PC-9 (cell line): ENCODE measurements at regions of chr5 and their contacts with region 1.

Region 1: DNA sequence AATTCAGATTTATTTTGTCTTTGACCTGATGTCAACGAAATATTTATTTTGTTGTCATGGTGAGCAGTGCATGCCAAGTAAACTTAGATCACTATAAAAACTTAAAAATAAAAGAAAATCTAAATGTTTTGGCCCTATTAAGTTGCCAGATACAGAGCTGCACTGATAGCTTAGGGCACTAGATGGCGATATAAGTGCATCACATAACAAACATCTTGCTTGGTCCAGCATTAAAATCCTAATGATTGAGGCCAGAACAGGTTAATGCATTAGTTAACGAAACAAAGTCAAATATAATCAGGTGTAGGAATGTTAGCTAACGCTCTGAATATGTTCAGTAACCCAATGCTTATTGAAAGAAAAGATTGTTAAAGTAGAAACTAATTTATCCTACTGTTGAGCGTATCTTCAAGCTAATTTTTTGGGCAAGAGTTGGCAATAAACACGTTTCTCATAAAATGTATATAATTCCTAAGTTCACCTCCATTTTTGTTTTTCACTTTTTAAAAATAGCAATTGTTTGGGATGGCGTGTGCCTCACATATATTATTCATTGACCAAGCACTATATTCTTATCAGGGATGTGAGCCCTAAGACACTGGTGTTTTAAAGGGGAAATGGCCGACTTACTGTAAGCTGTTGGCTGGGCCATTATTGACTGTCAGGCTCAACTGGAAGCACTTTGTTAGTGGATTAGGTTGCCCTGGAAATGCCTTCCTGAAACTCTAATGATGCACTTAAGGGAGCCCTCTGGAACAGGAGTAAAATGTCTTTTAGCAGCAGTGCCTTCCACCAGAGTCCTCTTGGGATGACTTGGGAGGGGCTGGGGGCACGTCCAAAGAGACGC is 33.3 kb downstream of the KCTD16 start:
- DNase-seq: peak; percentile 27 to 42
- H3K4me3 ChIP-seq: no peak overlapping the region
- H3K27ac ChIP-seq: no peak overlapping the region
- H3K4me1 ChIP-seq: peaks cover 3% of the 10 kb centered on the region
- H3K27me3 ChIP-seq: peaks cover 40% of the 10 kb centered on the region
- CTCF ChIP-seq: peak; percentile 93

Region 2: GRCh38 chr5:143874312-143874711 is 329.7 kb before region 1 on chr5:
- CTCF ChIA-PET with region 1: no interaction called
- POLR2A ChIA-PET with region 1: no interaction called
- intact Hi-C with region 1: no loop called
- DNase-seq: peak in 1 of 2 experiments; percentile 49
- H3K4me3 ChIP-seq: no peak overlapping the region
- H3K27ac ChIP-seq: no peak overlapping the region
- H3K4me1 ChIP-seq: peaks cover 14% of the 10 kb centered on the region; the same call in 1 of the 2 replicates
- H3K27me3 ChIP-seq: no peaks in the 10 kb centered on the region
- CTCF ChIP-seq: no peak

Region 3: GRCh38 chr5:145681686-145682085 is 1477.7 kb after region 1 on chr5:
- CTCF ChIA-PET with region 1: no interaction called
- POLR2A ChIA-PET with region 1: no interaction called
- intact Hi-C with region 1: loop called (anchors 10 kb)
- DNase-seq: peak; percentile 50 to 77
- H3K4me3 ChIP-seq: no peak overlapping the region
- H3K27ac ChIP-seq: no peak overlapping the region
- H3K4me1 ChIP-seq: no peaks in the 10 kb centered on the region
- H3K27me3 ChIP-seq: no peaks in the 10 kb centered on the region
- CTCF ChIP-seq: peak; percentile 88

Region 4: GRCh38 chr5:145825751-145826180 is 1621.8 kb after region 1 on chr5:
- CTCF ChIA-PET with region 1: interaction called, 3 read pairs
- POLR2A ChIA-PET with region 1: interaction called, 3 read pairs
- intact Hi-C with region 1: loop called (anchors 1 kb)
- DNase-seq: peak in 1 of 2 experiments; percentile 40
- H3K4me3 ChIP-seq: no peak overlapping the region
- H3K27ac ChIP-seq: no peak overlapping the region
- H3K4me1 ChIP-seq: peaks cover 11% of the 10 kb centered on the region
- H3K27me3 ChIP-seq: no peaks in the 10 kb centered on the region
- CTCF ChIP-seq: peak; percentile 88

Region 5: GRCh38 chr5:146049014-146049703 is 1845.2 kb after region 1 on chr5:
- CTCF ChIA-PET with region 1: interaction called, 4 read pairs
- POLR2A ChIA-PET with region 1: no interaction called
- intact Hi-C with region 1: loop called (anchors 1 kb)
- DNase-seq: peak; percentile 67 to 68
- H3K4me3 ChIP-seq: no peak overlapping the region
- H3K27ac ChIP-seq: no peak overlapping the region
- H3K4me1 ChIP-seq: no peaks in the 10 kb centered on the region
- H3K27me3 ChIP-seq: no peaks in the 10 kb centered on the region
- CTCF ChIP-seq: peak; percentile 92